T-cell (primary cell): ENCODE measurements at regions of chr9 and their contacts with region 1.

Region 1: DNA sequence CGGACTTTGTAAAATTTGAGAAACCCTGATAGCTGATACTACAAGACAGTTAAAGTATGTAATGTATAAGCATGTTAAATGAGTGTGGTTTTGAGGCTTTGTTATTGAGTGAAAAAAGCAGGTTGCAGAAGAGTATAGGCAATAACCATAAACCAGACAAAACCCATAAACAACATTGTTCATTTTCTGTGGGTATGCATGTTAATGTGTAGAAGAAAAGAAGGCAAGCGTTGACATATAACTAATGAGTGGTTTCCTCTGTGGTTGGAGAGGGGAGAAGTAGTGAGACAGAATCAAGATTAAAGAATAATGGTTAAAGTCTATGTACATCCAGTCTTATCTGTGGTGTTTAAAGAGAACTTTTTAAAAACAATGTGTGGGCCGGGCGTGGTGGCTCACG is 26.2 kb downstream of the RAD23B start:
- DNase-seq: peak in 1 of 35 experiments; percentile 54
- ATAC-seq: peak; percentile 68 to 92 (median 83)
- H3K4me3 ChIP-seq: no peak overlapping the region
- H3K4me3 Mint-ChIP-seq: peak overlapping the region; percentile 21 to 41 (median 37)
- H3K27ac ChIP-seq: no peak overlapping the region
- H3K27ac Mint-ChIP-seq: peak overlapping the region; percentile 76 to 80
- H3K4me1 ChIP-seq: peaks cover 11 to 29% of the 10 kb centered on the region in 2 experiments
- H3K4me1 Mint-ChIP-seq: peaks cover 70 to 80% (median 71%) of the 10 kb centered on the region in 3 donors
- H3K27me3 ChIP-seq: no peaks in the 10 kb centered on the region
- H3K27me3 Mint-ChIP-seq: no peaks in the 10 kb centered on the region

Region 2: GRCh38 chr9:107465467-107466451 is 156.5 kb after region 1 on chr9:
- CTCF ChIA-PET with region 1: no interaction called
- POLR2A ChIA-PET with region 1: no interaction called
- DNase-seq: peak in 2 of 35 experiments; percentile 3 to 21
- ATAC-seq: peak in 2 of 4 experiments; percentile 24 to 27
- H3K4me3 ChIP-seq: peak overlapping the region in 1 of 2 donors; percentile 11
- H3K4me3 Mint-ChIP-seq: peak overlapping the region in 2 of 3 donors; percentile 54 to 56
- H3K27ac ChIP-seq: no peak overlapping the region
- H3K27ac Mint-ChIP-seq: no peak overlapping the region
- H3K4me1 ChIP-seq: peaks cover 0 to 10% of the 10 kb centered on the region in 2 experiments
- H3K4me1 Mint-ChIP-seq: peaks cover 4 to 9% (median 5%) of the 10 kb centered on the region in 3 donors
- H3K27me3 ChIP-seq: peaks cover 10 to 31% of the 10 kb centered on the region in 2 experiments
- H3K27me3 Mint-ChIP-seq: peaks cover 44 to 53% of the 10 kb centered on the region in 2 donors

Region 3: DNA sequence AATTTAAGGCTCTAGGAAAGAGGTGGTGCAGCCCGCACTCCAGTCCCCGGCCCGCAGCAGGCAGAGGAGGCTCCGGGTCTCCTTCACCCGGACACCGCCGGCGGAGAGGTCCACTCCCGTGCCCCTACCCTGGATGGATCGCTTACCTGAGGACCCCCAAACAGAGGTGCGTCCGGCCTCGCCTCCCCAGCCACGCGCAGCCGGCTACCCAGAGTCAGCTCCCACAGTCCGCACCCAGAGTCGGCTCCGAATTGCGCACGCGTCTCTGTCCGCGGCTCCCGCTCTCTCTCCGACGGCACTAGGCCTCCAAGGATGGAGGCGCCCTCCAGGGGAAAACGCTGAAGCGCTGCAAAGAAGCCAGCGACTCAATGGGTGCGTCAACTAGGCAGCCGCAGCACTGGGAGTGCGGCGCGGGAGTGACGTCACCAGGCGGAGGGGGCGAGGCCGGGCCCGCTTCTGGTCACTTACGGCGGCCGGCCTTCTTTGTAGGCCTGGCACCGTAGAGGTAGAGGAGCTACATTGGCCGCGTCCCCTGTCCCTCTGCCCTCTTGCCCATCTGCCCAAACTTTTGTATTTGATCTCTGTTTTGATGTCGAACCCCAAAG is 1624.5 kb after region 1 on chr9 and contains the start of gene ELP1:
- CTCF ChIA-PET with region 1: no interaction called
- POLR2A ChIA-PET with region 1: interaction called in 1 of 2 experiments, 11 read pairs
- DNase-seq: peak; percentile 81 to 95 (median 89)
- ATAC-seq: peak; percentile 85 to 88 (median 87)
- H3K4me3 ChIP-seq: peak within 1 kb of the TSS; percentile 97 to 98
- H3K4me3 Mint-ChIP-seq: peak within 1 kb of the TSS; percentile 97 to 99 (median 98)
- H3K27ac ChIP-seq: peak within 1 kb of the TSS; percentile 87
- H3K27ac Mint-ChIP-seq: peak within 1 kb of the TSS; percentile 95 to 96
- H3K4me1 ChIP-seq: peaks cover 10 to 26% of the 10 kb centered on the region in 2 experiments
- H3K4me1 Mint-ChIP-seq: peaks cover 40 to 48% (median 44%) of the 10 kb centered on the region in 3 donors
- H3K27me3 ChIP-seq: no peaks in the 10 kb centered on the region
- H3K27me3 Mint-ChIP-seq: no peaks in the 10 kb centered on the region
- total RNA-seq, gene ELP1: 23.1 to 34.5 (median 25.0) TPM